ENCODE measurements at regions of chr7 and their contacts with region 1.

Region 1: DNA sequence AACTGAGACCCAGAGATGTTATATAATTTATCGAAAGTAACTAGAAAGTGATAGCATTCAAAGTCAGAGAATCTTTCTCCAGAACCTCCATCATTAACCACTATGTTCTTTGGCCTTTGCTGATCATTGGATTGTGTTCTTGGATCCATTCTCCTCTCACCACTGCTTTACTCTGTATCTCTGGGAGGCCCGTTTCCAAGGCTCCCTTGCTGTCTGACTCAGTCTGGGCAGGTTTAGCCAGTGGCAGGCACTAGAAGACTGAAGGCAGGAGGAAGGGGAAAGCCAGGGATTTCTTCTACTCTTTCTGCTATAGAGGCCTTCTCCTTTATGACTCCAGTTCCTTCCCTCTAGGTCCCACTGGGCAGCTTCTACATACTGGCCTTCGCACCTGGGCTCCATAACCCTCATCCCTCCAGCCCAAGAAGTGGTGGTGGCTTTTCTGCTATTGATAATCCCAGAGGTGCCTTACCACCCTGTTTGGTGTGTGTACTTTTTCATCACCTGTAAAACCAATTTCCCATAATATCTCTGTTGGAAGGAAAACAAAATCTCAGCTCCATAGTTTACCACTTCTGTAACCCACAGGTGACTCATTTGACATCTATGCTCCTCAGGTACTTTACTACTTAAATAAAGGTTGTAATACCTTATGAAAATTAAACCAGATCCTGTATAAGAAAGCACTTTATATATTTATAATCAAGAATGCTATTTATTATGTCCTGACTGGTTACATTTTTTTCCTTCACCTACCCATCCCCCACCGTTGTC is 36.0 kb downstream of the BCAP29 start:
- DNase-seq: no peak
- H3K4me3 Mint-ChIP-seq: no peak overlapping the region
- H3K27ac Mint-ChIP-seq: no peak overlapping the region
- H3K4me1 Mint-ChIP-seq: peaks cover 18% of the 10 kb centered on the region
- H3K27me3 Mint-ChIP-seq: no peaks in the 10 kb centered on the region

Region 2: GRCh38 chr7:107672183-107672582 is 56.1 kb after region 1 on chr7:
- intact Hi-C with region 1: loop called (anchors 5 kb)
- DNase-seq: no peak
- H3K4me3 Mint-ChIP-seq: no peak overlapping the region
- H3K27ac Mint-ChIP-seq: no peak overlapping the region
- H3K4me1 Mint-ChIP-seq: peaks cover 7% of the 10 kb centered on the region
- H3K27me3 Mint-ChIP-seq: no peaks in the 10 kb centered on the region